SK-N-SH (cell line): ENCODE measurements at regions of chr16 and their contacts with region 1.

Region 1: DNA sequence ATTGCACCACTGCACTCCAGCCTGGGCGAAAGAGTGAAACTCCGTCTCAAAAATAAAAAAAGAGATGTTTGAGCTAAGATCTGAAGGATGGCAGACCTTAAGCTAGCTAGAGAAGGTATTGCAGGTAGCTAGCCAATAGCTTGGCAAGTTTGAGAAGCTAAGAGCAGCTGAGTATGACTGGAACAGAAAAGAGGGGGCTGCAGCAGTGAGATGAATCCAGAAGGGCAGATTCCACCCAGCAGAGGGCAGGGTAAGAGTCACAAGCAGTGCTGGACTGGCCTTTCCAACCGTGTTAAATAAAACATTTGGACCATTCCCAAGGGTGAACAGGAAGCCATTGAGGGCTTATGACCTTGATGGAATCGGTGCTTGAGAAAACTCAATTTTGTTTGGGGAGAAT is 5.7 kb upstream of the PHAF1 start:
- DNase-seq: peak; percentile 37
- H3K4me3 ChIP-seq: no peak overlapping the region
- H3K27ac ChIP-seq: no peak overlapping the region
- H3K4me1 ChIP-seq: peaks cover 0 to 8% of the 10 kb centered on the region in 2 experiments; a peak in 1 of 4 replicates
- H3K27me3 ChIP-seq: no peaks in the 10 kb centered on the region
- CTCF ChIP-seq: peak; percentile 60
- EP300 ChIP-seq: no peak
- RAD21 ChIP-seq: peak; percentile 11; the same call in 1 of the 2 replicates

Region 2: DNA sequence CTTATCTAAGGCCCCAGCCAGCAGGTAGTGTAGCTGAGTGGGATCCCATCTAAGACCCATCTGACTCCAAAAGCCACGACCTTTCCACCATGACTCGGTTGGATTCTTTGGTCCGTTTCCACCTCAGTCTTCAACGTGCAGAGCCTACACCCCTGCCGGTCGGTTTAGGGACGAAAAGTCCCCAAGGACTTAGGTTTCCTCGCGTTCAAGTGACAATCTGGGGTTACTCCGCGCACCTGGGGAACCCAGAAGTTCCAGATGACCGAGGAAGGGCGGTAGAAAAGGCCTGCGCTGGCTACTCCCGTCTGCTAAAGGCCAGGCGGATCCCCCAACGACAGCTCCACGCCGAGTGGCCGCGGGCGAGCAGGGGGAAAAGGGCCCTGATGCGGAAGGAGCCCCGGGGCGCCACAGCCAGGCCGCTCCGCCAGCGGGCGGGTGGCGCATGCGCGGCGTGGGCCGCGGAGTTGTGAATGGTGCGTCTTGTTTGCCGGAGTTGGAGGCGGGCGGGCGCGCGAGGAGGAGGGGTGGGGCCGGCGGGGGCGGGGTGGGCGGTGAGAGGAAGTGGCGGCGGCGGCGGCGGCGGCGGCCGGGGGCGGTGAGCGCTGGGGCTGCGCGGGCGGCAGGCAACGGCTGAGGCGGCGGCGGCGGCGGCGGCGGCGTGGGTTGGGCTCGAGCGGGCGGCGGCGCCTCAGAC is 75.4 kb before region 1 on chr16 and contains the start of gene CBFB:
- CTCF ChIA-PET with region 1: interaction called, 59 read pairs
- POLR2A ChIA-PET with region 1: interaction called, 5 read pairs
- DNase-seq: peak; percentile 99
- H3K4me3 ChIP-seq: peak within 1 kb of the TSS; percentile 78 to 81
- H3K27ac ChIP-seq: peak within 1 kb of the TSS; percentile 87 to 91
- H3K4me1 ChIP-seq: peaks cover 14 to 31% of the 10 kb centered on the region in 2 experiments; a peak in 3 of 4 replicates
- H3K27me3 ChIP-seq: no peaks in the 10 kb centered on the region
- CTCF ChIP-seq: peak; percentile 16; the same call in 1 of the 2 replicates
- EP300 ChIP-seq: no peak
- RAD21 ChIP-seq: no peak
- polyA plus RNA-seq, gene CBFB: 38.8 and 40.1 TPM in 2 replicates

Region 3: DNA sequence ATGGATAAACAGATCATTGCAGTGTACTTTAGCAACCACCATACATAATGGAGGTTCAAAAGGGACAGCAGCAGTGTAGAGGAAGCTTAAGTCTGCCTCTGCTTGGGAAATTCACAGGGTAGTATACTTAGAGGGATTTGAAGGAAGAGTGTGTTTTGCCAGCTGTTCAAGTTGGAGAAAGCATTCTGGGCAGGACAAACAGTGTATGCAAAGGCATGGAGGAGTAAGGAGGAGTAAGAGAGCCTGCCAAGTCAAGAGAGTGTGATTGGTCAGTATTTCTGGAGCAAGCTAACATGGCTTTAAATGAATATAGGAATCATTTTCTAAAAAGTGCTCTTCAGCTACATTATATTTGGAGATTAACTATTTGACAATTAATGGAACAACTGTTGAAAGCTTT is 17.2 kb before region 1 on chr16:
- CTCF ChIA-PET with region 1: interaction called, 14 read pairs
- POLR2A ChIA-PET with region 1: no interaction called
- DNase-seq: no peak
- H3K4me3 ChIP-seq: no peak overlapping the region
- H3K27ac ChIP-seq: peak overlapping the region in 1 of 2 experiments; percentile 48; a peak in 2 of 4 replicates
- H3K4me1 ChIP-seq: peaks cover 19 to 28% of the 10 kb centered on the region in 2 experiments
- H3K27me3 ChIP-seq: no peaks in the 10 kb centered on the region
- CTCF ChIP-seq: no peak
- EP300 ChIP-seq: no peak
- RAD21 ChIP-seq: no peak

Region 4: GRCh38 chr16:67317853-67318252 is 213.8 kb after region 1 on chr16:
- CTCF ChIA-PET with region 1: no interaction called
- POLR2A ChIA-PET with region 1: no interaction called
- DNase-seq: no peak
- H3K4me3 ChIP-seq: no peak overlapping the region
- H3K27ac ChIP-seq: no peak overlapping the region
- H3K4me1 ChIP-seq: 0 out of 4 replicates have a peak, but pooled peaks cover 0 to under 1% of the 10 kb centered on the region in 2 experiments
- H3K27me3 ChIP-seq: no peaks in the 10 kb centered on the region
- CTCF ChIP-seq: no peak
- EP300 ChIP-seq: no peak
- RAD21 ChIP-seq: no peak